ENCODE measurements at regions of chr17 and their contacts with region 1.

Region 1: DNA sequence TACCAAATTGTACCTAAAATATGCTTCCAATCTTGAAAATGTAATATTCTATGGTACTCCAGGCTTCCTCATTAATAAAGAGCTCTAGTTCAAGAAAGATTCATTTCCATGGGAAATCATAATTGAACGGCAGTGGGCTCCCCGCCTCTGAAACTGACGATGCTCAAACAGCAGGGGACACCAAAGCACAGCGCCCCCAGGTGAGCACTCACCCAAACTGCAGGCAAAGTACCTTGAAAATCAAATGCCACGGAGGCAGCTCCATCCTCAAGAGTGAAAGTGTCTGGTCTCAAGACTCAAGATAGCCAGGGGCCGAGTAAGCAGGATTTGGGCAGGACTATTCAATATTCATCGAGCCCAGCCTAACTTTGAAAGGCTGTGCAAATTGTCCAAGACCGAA is 217.4 kb upstream of the TNRC6C start:
- DNase-seq: no peak
- ATAC-seq: no peak
- H3K4me3 ChIP-seq: no peak overlapping the region
- H3K27ac ChIP-seq: no peak overlapping the region
- H3K4me1 ChIP-seq: peaks cover 13 to 39% (median 27%) of the 10 kb centered on the region in 9 donors
- H3K27me3 ChIP-seq: no peaks in the 10 kb centered on the region
- CTCF ChIP-seq: peak in 6 of 9 donors; percentile 15 to 45 (median 26)

Region 2: DNA sequence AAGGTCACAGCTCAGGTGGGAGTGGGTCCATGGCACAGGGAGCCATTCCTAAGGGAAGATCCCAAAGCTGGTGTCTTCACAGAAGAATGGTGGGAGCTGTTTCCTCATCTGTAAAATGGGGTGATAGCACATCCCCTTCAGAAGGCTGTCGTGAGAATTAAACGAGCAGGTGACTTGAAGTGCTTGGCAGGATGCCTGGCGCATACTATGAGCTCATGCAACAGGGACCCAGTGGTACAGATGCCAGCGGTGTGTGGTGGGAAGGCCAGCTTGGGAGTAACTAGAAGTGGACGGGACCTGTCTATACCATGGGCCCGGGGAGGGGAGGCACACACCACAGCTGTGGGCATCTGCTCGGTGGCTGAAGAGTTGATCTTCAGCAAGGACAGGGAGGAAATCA is 28.1 kb after region 1 on chr17:
- intact Hi-C with region 1: no loop called
- DNase-seq: no peak
- ATAC-seq: no peak
- H3K4me3 ChIP-seq: no peak overlapping the region
- H3K27ac ChIP-seq: no peak overlapping the region
- H3K4me1 ChIP-seq: peaks cover 8 to 16% (median 13%) of the 10 kb centered on the region in 9 donors
- H3K27me3 ChIP-seq: no peaks in the 10 kb centered on the region
- CTCF ChIP-seq: no peak

Region 3: DNA sequence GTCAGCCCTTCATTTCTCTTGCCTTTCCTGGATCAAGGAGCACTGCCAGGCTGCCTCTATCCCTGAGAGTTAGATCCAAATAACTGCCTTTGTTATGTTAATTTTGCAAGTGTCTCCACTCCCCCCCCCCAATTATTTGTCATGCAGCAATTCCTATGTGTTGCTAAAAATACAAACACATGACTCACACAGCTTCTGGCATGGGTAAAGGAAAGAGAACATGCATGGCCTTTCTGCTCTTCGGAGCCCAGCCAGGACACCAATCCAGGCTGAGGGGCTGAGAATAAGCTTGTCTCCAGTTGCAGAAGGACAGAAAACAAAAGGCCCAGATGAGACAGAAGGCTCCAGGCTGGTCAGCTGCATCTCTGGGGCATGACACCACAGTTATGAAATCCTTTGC is 69.4 kb after region 1 on chr17:
- intact Hi-C with region 1: loop called in 2 of 10 experiments (anchors 5 kb)
- DNase-seq: peak; percentile 48 to 53
- ATAC-seq: peak; percentile 84 to 96 (median 91)
- H3K4me3 ChIP-seq: no peak overlapping the region
- H3K27ac ChIP-seq: peak overlapping the region in 8 of 10 donors; percentile 33 to 74 (median 52)
- H3K4me1 ChIP-seq: peaks cover 10 to 26% (median 21%) of the 10 kb centered on the region in 9 donors
- H3K27me3 ChIP-seq: no peaks in the 10 kb centered on the region
- CTCF ChIP-seq: no peak